AG04450 (cell line): ENCODE measurements at regions of chr11 and their contacts with region 1.

Region 1: GRCh38 chr11:46537537-46538295 is 56.1 kb downstream of the AMBRA1 start:
- DNase-seq: peak; percentile 61
- H3K4me3 ChIP-seq: no peak overlapping the region
- H3K27ac ChIP-seq: no peak overlapping the region
- H3K27me3 ChIP-seq: no peaks in the 10 kb centered on the region
- CTCF ChIP-seq: peak; percentile 99

Region 2: DNA sequence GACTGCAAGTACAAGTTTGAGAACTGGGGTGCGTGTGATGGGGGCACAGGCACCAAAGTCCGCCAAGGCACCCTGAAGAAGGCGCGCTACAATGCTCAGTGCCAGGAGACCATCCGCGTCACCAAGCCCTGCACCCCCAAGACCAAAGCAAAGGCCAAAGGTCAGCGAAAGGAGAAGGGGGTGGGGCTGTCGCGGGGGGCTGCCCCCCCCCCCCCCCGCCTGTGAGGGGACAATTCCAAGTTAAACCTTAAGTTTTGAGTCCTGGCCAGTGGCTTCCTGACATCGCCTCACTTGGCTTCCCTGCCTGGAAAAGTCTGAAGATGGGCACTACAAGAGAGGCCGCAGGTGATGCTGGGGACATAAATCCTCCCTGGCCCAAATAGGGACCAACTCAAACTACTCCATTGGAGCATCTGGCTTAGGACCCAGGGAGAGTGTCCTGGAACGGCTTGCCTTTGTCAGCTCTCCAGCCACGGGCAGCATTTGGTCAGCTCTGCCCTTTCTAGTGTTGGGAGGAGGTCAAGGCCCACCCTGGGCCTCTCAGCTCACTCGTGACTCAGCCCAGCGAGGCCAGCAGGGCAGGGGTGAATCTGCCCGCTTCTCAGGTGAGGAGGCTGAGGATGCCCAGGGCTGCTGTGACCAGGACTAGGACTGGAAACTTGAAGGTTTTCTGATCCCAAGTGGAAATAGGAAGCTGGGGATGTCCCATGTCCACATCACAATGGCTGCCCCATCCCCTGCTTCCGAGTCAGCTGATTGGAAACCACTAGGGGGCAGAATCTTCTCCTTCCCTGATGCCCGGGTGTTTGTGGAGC is 154.9 kb before region 1 on chr11:
- CTCF ChIA-PET with region 1: interaction called, 36 read pairs
- POLR2A ChIA-PET with region 1: no interaction called
- DNase-seq: no peak
- H3K4me3 ChIP-seq: peak overlapping the region; percentile 72
- H3K27ac ChIP-seq: no peak overlapping the region
- H3K27me3 ChIP-seq: no peaks in the 10 kb centered on the region
- CTCF ChIP-seq: peak; percentile 66

Region 3: GRCh38 chr11:46392421-46393230 is 145.1 kb before region 1 on chr11:
- CTCF ChIA-PET with region 1: interaction called, 36 read pairs
- POLR2A ChIA-PET with region 1: no interaction called
- DNase-seq: peak; percentile 48
- H3K4me3 ChIP-seq: peak overlapping the region; percentile 48
- H3K27ac ChIP-seq: no peak overlapping the region
- H3K27me3 ChIP-seq: peaks cover 29% of the 10 kb centered on the region
- CTCF ChIP-seq: no peak